Caco-2 (cell line): ENCODE measurements at regions of chr12 and their contacts with region 1.

Region 1: DNA sequence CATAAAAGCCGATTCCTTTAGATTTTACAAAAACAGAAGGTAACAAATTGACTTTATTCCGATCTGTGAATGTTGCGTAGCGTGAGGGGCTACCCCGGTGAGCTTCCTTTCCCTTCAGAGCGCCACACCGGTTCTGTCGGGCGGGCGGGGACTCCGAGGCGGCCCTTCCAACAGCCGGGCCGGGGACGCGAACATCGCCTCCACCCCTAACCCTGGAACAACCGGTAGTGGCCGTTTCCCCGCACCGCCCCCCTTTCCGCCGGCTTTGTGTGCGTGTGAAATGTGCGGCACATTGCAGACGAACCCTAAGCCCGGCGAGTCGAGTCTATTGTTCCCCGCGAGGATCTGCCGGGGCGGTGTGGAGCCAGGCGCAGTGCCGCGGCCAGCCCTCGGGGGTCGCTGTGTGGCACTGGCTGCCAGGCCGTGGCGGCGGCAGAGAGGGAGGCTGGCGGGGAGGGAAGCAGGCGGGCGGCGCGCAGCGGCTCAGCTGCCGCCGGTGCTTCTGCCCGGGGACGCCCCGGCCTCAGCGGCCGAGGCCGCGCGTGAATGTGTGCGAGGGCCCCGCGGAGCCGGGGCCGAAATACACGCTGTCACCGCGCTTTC is 775 bp upstream of the ARID2 start:
- DNase-seq: peak; percentile 99
- H3K4me3 ChIP-seq: peak overlapping the region; percentile 51
- H3K4me3 Mint-ChIP-seq: peak overlapping the region; percentile 79
- H3K27ac Mint-ChIP-seq: peak overlapping the region; percentile 80
- H3K4me1 ChIP-seq: peaks cover 30% of the 10 kb centered on the region
- H3K4me1 Mint-ChIP-seq: peaks cover 9% of the 10 kb centered on the region
- H3K27me3 ChIP-seq: no peaks in the 10 kb centered on the region
- H3K27me3 Mint-ChIP-seq: no peaks in the 10 kb centered on the region
- CTCF ChIP-seq: peak; percentile 91 to 95

Region 2: GRCh38 chr12:45130881-45131281 is 597.9 kb before region 1 on chr12:
- CTCF ChIA-PET with region 1: no interaction called
- POLR2A ChIA-PET with region 1: no interaction called
- intact Hi-C with region 1: loop called (anchors 10 kb)
- DNase-seq: peak; percentile 65 to 74
- H3K4me3 ChIP-seq: no peak overlapping the region
- H3K4me3 Mint-ChIP-seq: no peak overlapping the region
- H3K27ac Mint-ChIP-seq: no peak overlapping the region
- H3K4me1 ChIP-seq: no peaks in the 10 kb centered on the region
- H3K4me1 Mint-ChIP-seq: no peaks in the 10 kb centered on the region
- H3K27me3 ChIP-seq: no peaks in the 10 kb centered on the region
- H3K27me3 Mint-ChIP-seq: no peaks in the 10 kb centered on the region
- CTCF ChIP-seq: peak; percentile 77 to 85

Region 3: DNA sequence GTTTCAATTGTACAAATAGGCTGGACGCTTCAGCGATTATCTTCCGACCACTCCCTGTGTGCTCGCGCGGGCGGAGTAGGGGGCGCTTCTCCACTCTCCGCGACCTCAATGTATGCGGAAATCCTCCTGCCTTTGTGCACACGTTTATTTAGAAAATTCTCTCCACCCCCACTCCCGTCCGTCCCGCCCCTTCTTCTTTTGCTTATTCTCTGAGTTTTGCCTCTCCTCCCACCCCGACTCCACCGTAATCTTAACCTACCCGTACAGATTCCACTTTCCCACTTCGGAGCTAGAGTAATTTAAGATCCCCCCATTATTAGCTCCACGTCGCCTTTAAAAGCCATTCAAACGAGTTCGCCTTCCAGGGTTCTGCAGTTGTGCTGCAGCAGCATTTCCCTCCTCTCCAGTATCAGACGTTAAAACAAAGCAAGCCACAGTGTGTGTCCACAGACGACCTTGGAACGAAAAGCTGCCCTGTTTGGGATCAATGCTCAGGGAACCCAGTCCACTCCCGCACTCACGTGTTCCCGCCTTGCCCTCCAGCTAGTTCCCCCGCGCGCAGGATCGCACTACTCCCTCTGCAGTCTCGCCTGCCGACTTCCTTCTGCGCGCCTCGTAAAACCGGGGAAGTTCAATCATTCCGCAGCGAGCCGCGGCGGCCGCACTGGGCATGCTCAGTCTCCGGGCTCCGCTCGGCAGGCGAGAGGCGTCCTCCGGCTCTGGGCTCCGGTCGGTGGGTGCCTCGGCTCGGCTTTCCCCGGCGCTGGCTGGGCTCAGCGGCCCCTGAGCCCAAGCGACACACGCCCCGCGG is 513.1 kb before region 1 on chr12 and contains the start of gene ANO6:
- CTCF ChIA-PET with region 1: no interaction called
- POLR2A ChIA-PET with region 1: no interaction called
- intact Hi-C with region 1: loop called (anchors 5 kb)
- DNase-seq: peak; percentile 93 to 94
- H3K4me3 ChIP-seq: peak within 1 kb of the TSS; percentile 70
- H3K4me3 Mint-ChIP-seq: peak within 1 kb of the TSS; percentile 96
- H3K27ac Mint-ChIP-seq: peak within 1 kb of the TSS; percentile 84
- H3K4me1 ChIP-seq: peaks cover 22% of the 10 kb centered on the region
- H3K4me1 Mint-ChIP-seq: peaks cover 24% of the 10 kb centered on the region
- H3K27me3 ChIP-seq: no peaks in the 10 kb centered on the region
- H3K27me3 Mint-ChIP-seq: no peaks in the 10 kb centered on the region
- CTCF ChIP-seq: peak in 1 of 2 experiments; percentile 70
- total RNA-seq, gene ANO6: 116 and 126 TPM in 2 replicates

Region 4: GRCh38 chr12:45543906-45544315 is 184.8 kb before region 1 on chr12:
- CTCF ChIA-PET with region 1: interaction called, 27 read pairs
- POLR2A ChIA-PET with region 1: interaction called, 10 read pairs
- intact Hi-C with region 1: loop called (anchors 1 kb)
- DNase-seq: peak; percentile 66 to 79
- H3K4me3 ChIP-seq: no peak overlapping the region
- H3K4me3 Mint-ChIP-seq: no peak overlapping the region
- H3K27ac Mint-ChIP-seq: no peak overlapping the region
- H3K4me1 ChIP-seq: peaks cover 20% of the 10 kb centered on the region
- H3K4me1 Mint-ChIP-seq: peaks cover 32% of the 10 kb centered on the region
- H3K27me3 ChIP-seq: no peaks in the 10 kb centered on the region
- H3K27me3 Mint-ChIP-seq: no peaks in the 10 kb centered on the region
- CTCF ChIP-seq: peak; percentile 91 to 93

Region 5: DNA sequence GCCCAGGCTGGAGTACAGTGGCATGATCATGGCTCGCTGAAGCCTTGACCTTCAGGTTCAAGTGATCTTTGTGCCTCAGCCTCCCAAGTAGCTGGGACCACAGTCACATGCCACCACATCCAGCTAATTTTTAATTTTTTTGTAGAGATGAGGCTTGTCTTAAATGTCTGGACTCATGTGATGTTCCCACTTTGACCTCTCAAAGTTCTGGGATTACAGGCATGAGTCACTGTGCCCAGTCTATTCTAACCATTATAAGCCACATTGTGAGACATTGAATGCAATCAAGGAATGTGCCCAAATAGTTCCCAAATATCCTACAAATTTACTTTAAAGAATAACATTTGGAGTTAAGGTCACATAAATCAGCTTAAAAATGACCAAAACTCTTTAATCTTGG is 130.0 kb before region 1 on chr12:
- CTCF ChIA-PET with region 1: no interaction called
- POLR2A ChIA-PET with region 1: no interaction called
- intact Hi-C with region 1: loop called (anchors 1 kb)
- DNase-seq: no peak
- H3K4me3 ChIP-seq: no peak overlapping the region
- H3K4me3 Mint-ChIP-seq: no peak overlapping the region
- H3K27ac Mint-ChIP-seq: no peak overlapping the region
- H3K4me1 ChIP-seq: peaks cover 12% of the 10 kb centered on the region
- H3K4me1 Mint-ChIP-seq: peaks cover 27% of the 10 kb centered on the region
- H3K27me3 ChIP-seq: no peaks in the 10 kb centered on the region
- H3K27me3 Mint-ChIP-seq: no peaks in the 10 kb centered on the region
- CTCF ChIP-seq: no peak

Region 6: DNA sequence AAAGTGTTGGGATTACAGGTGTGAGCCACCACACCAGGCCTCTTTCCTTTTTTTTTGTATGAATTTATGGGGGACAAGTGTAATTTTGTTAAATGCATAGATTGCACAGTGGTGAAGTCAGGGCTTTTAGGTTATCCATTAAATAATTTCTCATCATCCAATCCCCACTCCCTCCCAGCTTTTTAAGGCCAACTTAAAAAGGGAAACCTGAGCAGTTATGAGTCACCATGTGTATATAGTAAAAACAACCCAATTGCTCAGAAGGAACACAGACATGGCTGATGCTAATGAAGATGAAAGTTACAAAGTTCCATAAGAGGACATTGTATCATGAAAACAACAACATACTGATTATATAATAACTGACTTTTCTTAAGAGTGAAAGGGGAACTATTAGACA is 24.8 kb before region 1 on chr12:
- CTCF ChIA-PET with region 1: interaction called, 3 read pairs
- POLR2A ChIA-PET with region 1: no interaction called
- intact Hi-C with region 1: loop called (anchors 1 kb)
- DNase-seq: no peak
- H3K4me3 ChIP-seq: no peak overlapping the region
- H3K4me3 Mint-ChIP-seq: no peak overlapping the region
- H3K27ac Mint-ChIP-seq: no peak overlapping the region
- H3K4me1 ChIP-seq: peaks cover 47% of the 10 kb centered on the region
- H3K4me1 Mint-ChIP-seq: peaks cover 36% of the 10 kb centered on the region
- H3K27me3 ChIP-seq: no peaks in the 10 kb centered on the region
- H3K27me3 Mint-ChIP-seq: no peaks in the 10 kb centered on the region
- CTCF ChIP-seq: no peak

Region 7: DNA sequence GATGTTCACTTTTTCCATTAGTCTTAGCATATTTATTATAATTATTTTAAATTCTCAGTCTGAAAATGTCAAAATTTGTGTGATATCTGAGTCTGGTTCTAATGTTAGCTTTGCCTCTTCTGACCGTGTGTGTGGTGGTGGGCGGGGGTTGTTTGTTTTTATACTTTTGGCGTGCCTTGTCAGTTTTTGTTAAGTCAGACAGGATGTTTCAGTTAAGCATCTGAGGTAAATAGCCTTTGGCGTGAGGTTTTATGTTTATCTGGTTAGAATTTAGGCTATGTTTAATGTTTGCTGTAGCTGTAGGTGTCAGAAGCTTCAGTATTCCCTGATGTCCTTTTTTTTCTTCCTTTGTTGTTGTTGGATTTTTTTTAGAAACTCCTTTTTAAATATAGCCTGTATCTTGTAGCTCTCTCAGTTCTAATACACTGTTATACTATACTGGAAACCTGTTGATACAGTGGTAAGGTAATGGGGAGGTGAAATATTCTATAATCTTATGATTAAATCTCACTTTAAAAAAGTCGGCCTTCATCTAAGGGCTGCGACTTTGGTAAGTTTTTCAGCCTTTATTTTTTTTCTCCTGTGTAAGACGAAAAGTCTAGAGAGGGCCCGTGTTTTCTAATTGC is 150.0 kb after region 1 on chr12:
- CTCF ChIA-PET with region 1: no interaction called
- POLR2A ChIA-PET with region 1: no interaction called
- intact Hi-C with region 1: no loop called
- DNase-seq: no peak
- H3K4me3 ChIP-seq: no peak overlapping the region
- H3K4me3 Mint-ChIP-seq: no peak overlapping the region
- H3K27ac Mint-ChIP-seq: no peak overlapping the region
- H3K4me1 ChIP-seq: no peaks in the 10 kb centered on the region
- H3K4me1 Mint-ChIP-seq: peaks cover 16% of the 10 kb centered on the region
- H3K27me3 ChIP-seq: no peaks in the 10 kb centered on the region
- H3K27me3 Mint-ChIP-seq: no peaks in the 10 kb centered on the region
- CTCF ChIP-seq: no peak